CD8-positive, alpha-beta memory T cell (primary cell): ENCODE measurements at regions of chr11 and their contacts with region 1.

Region 1: GRCh38 chr11:34105079-34105956 is at the start of gene NAT10:
- DNase-seq: peak; percentile 92 to 98 (median 97)
- H3K4me3 ChIP-seq: peak within 1 kb of the TSS; percentile 84
- H3K4me3 Mint-ChIP-seq: peak within 1 kb of the TSS; percentile 94 to 99 (median 96)
- H3K27ac ChIP-seq: peak within 1 kb of the TSS; percentile 92
- H3K27ac Mint-ChIP-seq: peak within 1 kb of the TSS; percentile 98 to 99 (median 99)
- H3K4me1 ChIP-seq: peaks cover 25% of the 10 kb centered on the region
- H3K4me1 Mint-ChIP-seq: peaks cover 52 to 66% (median 63%) of the 10 kb centered on the region in 3 donors
- H3K27me3 ChIP-seq: no peaks in the 10 kb centered on the region
- H3K27me3 Mint-ChIP-seq: peaks cover 0 to 6% of the 10 kb centered on the region in 2 donors
- total RNA-seq, gene NAT10: 143 to 148 TPM

Region 2: DNA sequence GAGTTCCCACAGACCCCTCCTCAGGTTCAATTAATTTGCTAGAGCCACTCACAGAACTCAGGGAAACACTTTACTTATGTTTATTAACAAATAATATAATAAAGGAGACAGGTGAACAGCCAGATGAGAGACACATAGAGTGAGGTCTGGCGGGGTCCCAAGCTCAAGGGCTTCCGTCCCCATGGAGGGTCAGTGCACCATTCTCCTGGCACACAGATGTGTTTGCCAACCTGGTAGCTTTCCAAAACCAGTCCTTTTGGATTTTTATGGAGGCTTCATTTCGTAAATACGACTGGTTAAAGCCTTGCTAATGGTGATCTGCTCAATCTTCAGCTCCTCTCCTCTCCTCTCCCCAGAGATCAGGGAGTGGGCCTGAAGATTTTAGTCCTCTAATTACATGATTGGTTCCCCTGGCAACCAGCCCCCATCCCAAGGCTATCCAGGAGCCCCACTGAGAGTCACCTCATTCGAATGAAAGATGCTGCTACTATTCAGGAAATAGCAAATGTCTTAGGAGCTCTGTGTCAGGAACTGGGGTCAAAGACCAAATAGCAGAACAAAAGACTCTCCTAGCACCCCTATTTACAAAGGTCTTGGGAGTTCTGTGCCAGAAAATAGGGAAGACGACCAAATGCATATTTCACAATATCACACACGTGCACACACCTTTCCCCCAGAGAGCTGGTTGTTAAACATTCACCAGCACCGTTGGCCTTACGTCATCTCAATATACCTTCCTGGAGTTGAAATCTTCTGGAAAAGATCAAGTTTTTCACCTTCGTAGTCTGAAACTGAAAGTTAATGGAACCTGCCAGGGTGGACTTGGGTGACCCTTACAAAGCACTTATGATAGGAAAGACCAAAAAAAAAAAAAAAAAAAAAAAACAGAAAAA is 77.6 kb before region 1 on chr11:
- CTCF ChIA-PET with region 1: no interaction called
- POLR2A ChIA-PET with region 1: no interaction called
- DNase-seq: no peak
- H3K4me3 ChIP-seq: no peak overlapping the region
- H3K4me3 Mint-ChIP-seq: no peak overlapping the region
- H3K27ac ChIP-seq: no peak overlapping the region
- H3K27ac Mint-ChIP-seq: no peak overlapping the region
- H3K4me1 ChIP-seq: no peaks in the 10 kb centered on the region
- H3K4me1 Mint-ChIP-seq: no peaks in the 10 kb centered on the region
- H3K27me3 ChIP-seq: no peaks in the 10 kb centered on the region
- H3K27me3 Mint-ChIP-seq: peaks cover 8 to 13% of the 10 kb centered on the region in 2 donors

Region 3: GRCh38 chr11:34051349-34052035 is 53.8 kb before region 1 on chr11 and contains the start of gene CAPRIN1:
- CTCF ChIA-PET with region 1: interaction called, 6 read pairs
- POLR2A ChIA-PET with region 1: interaction called, 54 read pairs
- DNase-seq: peak; percentile 78 to 91 (median 90)
- H3K4me3 ChIP-seq: peak within 1 kb of the TSS; percentile 90
- H3K4me3 Mint-ChIP-seq: peak within 1 kb of the TSS; percentile 96 to 100 (median 99)
- H3K27ac ChIP-seq: peak within 1 kb of the TSS; percentile 98
- H3K27ac Mint-ChIP-seq: peak within 1 kb of the TSS; percentile 94 to 99 (median 96)
- H3K4me1 ChIP-seq: peaks cover 30% of the 10 kb centered on the region
- H3K4me1 Mint-ChIP-seq: peaks cover 32 to 36% (median 36%) of the 10 kb centered on the region in 3 donors
- H3K27me3 ChIP-seq: no peaks in the 10 kb centered on the region
- H3K27me3 Mint-ChIP-seq: peaks cover 3 to 6% of the 10 kb centered on the region in 2 donors
- total RNA-seq, gene CAPRIN1: 275 to 287 TPM